Endothelial cell of umbilical vein (primary cell): ENCODE measurements at regions of chr1 and their contacts with region 1.

Region 1: DNA sequence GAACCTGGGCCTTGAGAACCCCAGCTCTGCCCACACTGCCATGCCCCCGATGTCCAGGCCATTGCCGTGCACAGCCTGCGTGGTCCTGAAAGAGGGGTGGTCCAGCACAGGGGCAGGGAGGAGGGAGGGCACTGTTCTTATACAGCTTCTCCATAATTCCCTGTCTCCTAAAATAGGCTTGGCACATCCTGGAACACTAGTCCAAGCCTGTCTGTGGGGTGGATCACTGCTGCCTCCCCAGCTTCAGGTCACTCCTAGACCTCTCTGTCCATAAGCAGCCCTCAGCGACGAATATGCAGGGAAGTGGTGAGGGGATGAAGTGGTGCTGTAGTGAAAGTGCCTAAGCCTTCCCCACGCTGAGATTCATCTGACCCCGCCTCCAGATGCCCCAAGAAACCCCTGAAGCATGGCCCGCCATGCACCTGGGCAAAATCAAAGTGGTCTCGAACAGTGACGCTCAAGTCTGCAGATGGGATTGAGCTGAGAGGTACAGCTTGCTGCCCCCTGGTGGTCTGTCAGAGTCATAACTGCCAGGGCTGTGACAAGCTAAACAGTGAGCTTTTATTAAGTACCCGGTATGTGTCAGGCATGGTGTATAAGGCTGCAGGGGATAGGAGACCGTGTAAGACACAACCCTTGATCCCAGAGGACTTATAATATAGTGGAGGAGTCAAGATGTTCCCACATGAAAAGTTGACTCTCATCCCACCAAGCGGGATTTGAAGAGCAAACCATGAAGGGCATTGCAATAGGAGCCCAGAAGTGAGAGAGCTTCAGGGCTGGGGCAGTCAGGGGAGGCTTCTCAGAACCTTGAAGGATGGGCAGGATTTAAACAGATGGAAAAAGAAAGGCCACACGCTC is 66.6 kb downstream of the FAM163A start:
- DNase-seq: peak; percentile 75
- H3K4me3 ChIP-seq: no peak overlapping the region
- H3K27ac ChIP-seq: no peak overlapping the region
- H3K4me1 ChIP-seq: no peaks in the 10 kb centered on the region
- H3K27me3 ChIP-seq: peaks cover 2 to 10% of the 10 kb centered on the region in 2 experiments
- CTCF ChIP-seq: peak; percentile 84 to 90
- POLR2A ChIP-seq: no peak

Region 2: GRCh38 chr1:179583771-179584320 is 225.9 kb before region 1 on chr1:
- CTCF ChIA-PET with region 1: no interaction called
- POLR2A ChIA-PET with region 1: no interaction called
- dilution Hi-C with region 1: no loop called
- intact Hi-C with region 1: no loop called
- DNase-seq: no peak
- H3K4me3 ChIP-seq: no peak overlapping the region
- H3K27ac ChIP-seq: no peak overlapping the region
- H3K4me1 ChIP-seq: no peaks in the 10 kb centered on the region
- H3K27me3 ChIP-seq: peaks cover 12 to 25% of the 10 kb centered on the region in 2 experiments
- CTCF ChIP-seq: no peak
- POLR2A ChIP-seq: no peak

Region 3: GRCh38 chr1:179599623-179600249 is 210.0 kb before region 1 on chr1:
- CTCF ChIA-PET with region 1: interaction called, 6 read pairs
- POLR2A ChIA-PET with region 1: no interaction called
- dilution Hi-C with region 1: no loop called
- intact Hi-C with region 1: loop called (anchors 10 kb)
- DNase-seq: peak; percentile 40
- H3K4me3 ChIP-seq: no peak overlapping the region
- H3K27ac ChIP-seq: no peak overlapping the region
- H3K4me1 ChIP-seq: no peaks in the 10 kb centered on the region
- H3K27me3 ChIP-seq: peaks cover 3 to 9% of the 10 kb centered on the region in 2 experiments
- CTCF ChIP-seq: peak in 1 of 2 donors; percentile 28
- POLR2A ChIP-seq: no peak

Region 4: GRCh38 chr1:179728271-179728670 is 81.5 kb before region 1 on chr1:
- CTCF ChIA-PET with region 1: interaction called, 13 read pairs
- POLR2A ChIA-PET with region 1: no interaction called
- dilution Hi-C with region 1: no loop called
- intact Hi-C with region 1: no loop called
- DNase-seq: no peak
- H3K4me3 ChIP-seq: no peak overlapping the region
- H3K27ac ChIP-seq: no peak overlapping the region
- H3K4me1 ChIP-seq: no peaks in the 10 kb centered on the region
- H3K27me3 ChIP-seq: peaks cover 23 to 29% of the 10 kb centered on the region in 2 experiments
- CTCF ChIP-seq: no peak
- POLR2A ChIP-seq: no peak

Region 5: GRCh38 chr1:179770884-179771502 is 38.7 kb before region 1 on chr1:
- CTCF ChIA-PET with region 1: interaction called, 12 read pairs
- POLR2A ChIA-PET with region 1: no interaction called
- dilution Hi-C with region 1: no loop called
- intact Hi-C with region 1: no loop called
- DNase-seq: no peak
- H3K4me3 ChIP-seq: no peak overlapping the region
- H3K27ac ChIP-seq: no peak overlapping the region
- H3K4me1 ChIP-seq: no peaks in the 10 kb centered on the region
- H3K27me3 ChIP-seq: peaks cover 0 to 3% of the 10 kb centered on the region in 2 experiments
- CTCF ChIP-seq: no peak
- POLR2A ChIP-seq: no peak

Region 6: DNA sequence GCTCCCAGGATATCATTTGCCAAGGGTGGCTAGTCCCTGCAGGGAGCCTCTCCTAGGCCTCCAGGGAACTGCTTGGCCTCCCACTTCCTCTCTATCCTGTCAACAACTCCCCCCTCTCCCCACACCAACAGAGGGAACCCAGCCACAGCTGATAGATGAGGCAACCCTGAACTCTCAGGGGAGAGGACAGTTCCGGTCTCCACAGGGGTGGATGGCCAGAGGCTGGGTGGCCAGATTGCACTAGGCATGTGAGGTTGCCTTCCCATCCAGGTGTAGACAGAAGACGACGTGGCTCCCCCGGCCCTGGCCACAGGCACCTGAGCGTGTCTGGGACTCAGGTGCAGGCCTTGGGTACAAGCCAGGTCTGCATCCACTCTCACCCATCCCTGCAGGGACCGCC is 14.5 kb after region 1 on chr1:
- CTCF ChIA-PET with region 1: interaction called, 30 read pairs
- POLR2A ChIA-PET with region 1: interaction called, 3 read pairs
- dilution Hi-C with region 1: no loop called
- intact Hi-C with region 1: no loop called
- DNase-seq: no peak
- H3K4me3 ChIP-seq: no peak overlapping the region
- H3K27ac ChIP-seq: no peak overlapping the region
- H3K4me1 ChIP-seq: no peaks in the 10 kb centered on the region
- H3K27me3 ChIP-seq: peaks cover 0 to 8% of the 10 kb centered on the region in 2 experiments
- CTCF ChIP-seq: no peak
- POLR2A ChIP-seq: no peak

Region 7: DNA sequence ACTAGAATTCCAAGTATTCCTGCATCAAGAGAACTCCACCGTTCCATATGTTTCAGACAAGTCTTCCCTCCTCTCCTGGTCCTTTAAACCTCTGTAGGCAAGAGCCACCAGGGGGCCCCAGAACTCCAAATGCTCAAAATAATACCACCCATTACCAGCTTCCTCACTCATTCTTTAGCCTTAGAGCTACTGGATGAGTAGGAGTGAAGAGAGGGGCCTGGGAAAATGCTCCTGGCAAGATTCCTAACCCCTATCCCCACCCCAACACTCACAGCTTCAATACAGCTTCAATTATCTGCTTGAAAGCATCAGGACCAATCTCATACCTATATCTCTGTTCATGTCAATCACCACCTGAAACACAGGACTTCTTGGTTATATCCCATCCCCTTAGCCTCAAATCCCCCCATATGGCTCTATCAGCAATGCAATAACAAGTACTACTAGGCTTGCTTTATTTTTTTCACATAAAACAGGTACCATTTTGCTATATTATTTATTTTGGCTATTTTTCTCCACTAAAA is 58.1 kb after region 1 on chr1:
- CTCF ChIA-PET with region 1: interaction called, 10 read pairs
- POLR2A ChIA-PET with region 1: no interaction called
- dilution Hi-C with region 1: no loop called
- intact Hi-C with region 1: no loop called
- DNase-seq: peak; percentile 68
- H3K4me3 ChIP-seq: no peak overlapping the region
- H3K27ac ChIP-seq: no peak overlapping the region
- H3K4me1 ChIP-seq: no peaks in the 10 kb centered on the region
- H3K27me3 ChIP-seq: no peaks in the 10 kb centered on the region
- CTCF ChIP-seq: peak; percentile 79 to 80
- POLR2A ChIP-seq: no peak